ENCODE measurements at regions of chr6 and their contacts with region 1.

Region 1: GRCh38 chr6:32785781-32786533 is 22.6 kb upstream of the HLA-DQB2 start:
- DNase-seq: no peak
- H3K4me3 ChIP-seq: no peak overlapping the region
- H3K27me3 ChIP-seq: no peaks in the 10 kb centered on the region
- CTCF ChIP-seq: peak; percentile 62

Region 2: GRCh38 chr6:32796848-32797776 is 11.2 kb after region 1 on chr6:
- CTCF ChIA-PET with region 1: interaction called, 22 read pairs
- POLR2A ChIA-PET with region 1: no interaction called
- DNase-seq: no peak
- H3K4me3 ChIP-seq: peak overlapping the region; percentile 5; the same call in 1 of the 2 replicates
- H3K27me3 ChIP-seq: peaks cover 9% of the 10 kb centered on the region
- CTCF ChIP-seq: peak; percentile 78